Motor neuron (in vitro differentiated cells): ENCODE measurements at regions of chr17 and their contacts with region 1.

Region 1: GRCh38 chr17:1267471-1267947 is 2.7 kb upstream of the BHLHA9 start:
- ATAC-seq: peak in 2 of 8 experiments; percentile 3 to 7
- H3K4me3 ChIP-seq: peak overlapping the region; percentile 53 to 80 (median 55)
- H3K27ac ChIP-seq: peak overlapping the region in 1 of 2 donors; percentile 75
- H3K4me1 ChIP-seq: peaks cover 8 to 10% of the 10 kb centered on the region in 2 donors

Region 2: GRCh38 chr17:1340371-1340770 is 72.9 kb after region 1 on chr17:
- in situ Hi-C with region 1: no loop called
- ATAC-seq: no peak
- H3K4me3 ChIP-seq: no peak overlapping the region
- H3K27ac ChIP-seq: no peak overlapping the region
- H3K4me1 ChIP-seq: no peaks in the 10 kb centered on the region

Region 3: GRCh38 chr17:1516388-1517161 is 249.1 kb after region 1 on chr17 and contains the start of gene INPP5K:
- in situ Hi-C with region 1: loop called in 6 of 9 experiments (anchors 10 to 25 kb)
- ATAC-seq: peak; percentile 79 to 98 (median 97)
- H3K4me3 ChIP-seq: peak within 1 kb of the TSS; percentile 55 to 92 (median 76)
- H3K27ac ChIP-seq: peak within 1 kb of the TSS; percentile 67 to 86
- H3K4me1 ChIP-seq: peaks cover 10 to 13% of the 10 kb centered on the region in 2 donors
- total RNA-seq, gene INPP5K: 10.3 to 28.6 (median 16.2) TPM